Panc1 (cell line): ENCODE measurements at regions of chr12 and their contacts with region 1.

Region 1: GRCh38 chr12:57846577-57847319 is at the start of gene CTDSP2:
- DNase-seq: peak; percentile 81
- ATAC-seq: peak; percentile 85
- H3K4me3 ChIP-seq: peak within 1 kb of the TSS; percentile 93 to 94
- H3K27ac ChIP-seq: peak within 1 kb of the TSS; percentile 94
- H3K4me1 ChIP-seq: peaks cover 30% of the 10 kb centered on the region
- H3K27me3 ChIP-seq: no peaks in the 10 kb centered on the region
- CTCF ChIP-seq: no peak
- total RNA-seq, gene CTDSP2: 120 TPM

Region 2: DNA sequence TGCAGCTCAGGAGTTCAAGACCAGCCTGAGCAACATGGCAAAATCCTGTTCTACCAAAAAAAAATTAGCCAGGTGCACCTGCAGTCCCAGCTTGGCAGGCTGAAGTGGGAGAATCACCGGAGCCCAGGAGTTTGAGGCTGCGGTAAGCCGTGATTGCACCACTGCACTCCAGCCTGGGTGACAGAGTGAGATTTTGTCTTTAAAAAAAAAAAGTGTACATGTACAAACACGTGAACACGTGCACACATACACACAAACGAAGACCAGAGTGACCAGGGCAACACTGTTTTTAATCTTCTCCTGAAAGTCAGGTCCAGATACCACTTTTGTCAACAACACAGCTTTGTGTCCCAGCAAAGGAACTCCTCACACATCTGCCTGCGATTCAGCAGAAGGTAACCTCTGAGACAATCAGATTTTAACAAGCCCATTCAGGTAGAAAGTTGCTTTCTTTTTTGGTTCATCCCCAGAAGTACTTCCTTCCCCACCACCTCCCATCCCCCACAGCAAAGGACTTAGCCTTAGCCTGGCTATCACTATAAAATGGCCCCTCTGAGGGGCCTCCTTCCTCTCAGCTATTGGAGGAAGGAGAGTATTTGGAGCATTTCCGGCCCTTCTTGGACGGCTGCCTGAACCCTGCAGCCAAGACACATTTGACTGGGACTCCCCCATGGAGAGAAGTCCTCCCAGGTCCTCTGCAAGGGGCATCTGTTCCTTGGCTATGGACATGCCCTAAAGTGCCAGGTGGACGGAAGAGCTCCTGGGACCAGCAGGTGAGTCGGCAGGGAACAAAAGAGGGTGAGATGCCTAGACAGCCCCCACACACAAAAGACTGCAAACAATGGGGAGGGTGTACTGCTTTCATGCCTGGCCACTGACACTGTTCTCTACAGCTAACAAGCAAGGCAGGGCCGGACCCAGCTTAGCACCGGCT is 10.0 kb before region 1 on chr12:
- CTCF ChIA-PET with region 1: interaction called, 11 read pairs
- POLR2A ChIA-PET with region 1: no interaction called
- in situ Hi-C with region 1: no loop called
- intact Hi-C with region 1: no loop called
- DNase-seq: no peak
- ATAC-seq: peak; percentile 64
- H3K4me3 ChIP-seq: peak overlapping the region in 1 of 2 experiments; percentile 34; a peak in 2 of 4 replicates
- H3K27ac ChIP-seq: peak overlapping the region; percentile 83
- H3K4me1 ChIP-seq: peaks cover 91% of the 10 kb centered on the region
- H3K27me3 ChIP-seq: no peaks in the 10 kb centered on the region
- CTCF ChIP-seq: no peak

Region 3: GRCh38 chr12:57896434-57897201 is 49.9 kb after region 1 on chr12:
- CTCF ChIA-PET with region 1: interaction called, 4 read pairs
- POLR2A ChIA-PET with region 1: interaction called, 23 read pairs
- in situ Hi-C with region 1: no loop called
- intact Hi-C with region 1: no loop called
- DNase-seq: peak; percentile 20
- ATAC-seq: peak; percentile 76
- H3K4me3 ChIP-seq: peak overlapping the region; percentile 46 to 60
- H3K27ac ChIP-seq: peak overlapping the region; percentile 97
- H3K4me1 ChIP-seq: peaks cover 62% of the 10 kb centered on the region
- H3K27me3 ChIP-seq: no peaks in the 10 kb centered on the region
- CTCF ChIP-seq: no peak; the same call in 1 of the 2 replicates

Region 4: DNA sequence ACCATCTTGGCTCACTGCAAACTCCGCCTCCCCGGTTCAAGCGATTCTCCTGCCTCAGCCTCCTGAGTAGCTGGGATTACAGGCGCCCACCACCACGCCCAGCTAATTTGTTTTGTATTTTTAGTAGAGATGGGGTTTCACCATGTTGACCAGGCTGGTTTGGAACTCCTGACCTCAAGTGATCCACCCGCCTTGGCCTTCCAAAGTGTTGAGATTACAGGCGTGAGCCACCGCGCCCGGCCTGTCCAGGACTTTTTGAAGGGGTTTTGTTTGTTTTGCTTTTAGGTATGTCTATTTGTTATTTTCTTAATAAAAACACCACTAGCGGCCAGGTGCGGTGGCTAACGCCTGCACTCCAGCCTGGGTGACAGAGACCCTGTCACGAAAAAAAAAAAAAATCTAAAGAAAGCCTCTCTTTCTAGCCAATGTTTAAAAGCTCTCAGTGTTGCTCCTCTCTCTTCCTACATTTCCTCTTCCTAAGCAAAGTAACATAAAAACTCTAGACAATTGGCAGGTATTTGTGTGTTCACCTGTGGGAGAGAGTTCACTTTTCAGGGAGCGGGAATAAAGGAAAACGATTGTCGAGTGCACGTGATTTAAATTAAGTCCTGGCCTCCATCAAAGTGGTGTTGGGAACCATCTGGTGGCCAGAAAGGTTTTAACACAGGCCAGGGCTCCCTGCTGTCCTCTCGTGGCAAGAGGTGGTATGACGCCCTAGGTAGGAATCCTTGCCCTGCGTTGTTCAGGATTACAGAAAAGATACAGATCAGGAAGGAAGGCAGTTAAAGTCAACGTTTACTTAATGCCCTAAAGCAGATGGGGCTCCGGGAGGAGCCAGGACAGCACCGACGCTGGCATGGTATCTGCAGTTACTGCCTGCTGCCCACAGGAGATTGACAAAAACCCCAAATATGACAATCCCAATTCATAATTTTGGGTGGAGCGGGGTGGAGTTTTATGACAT is 58.4 kb after region 1 on chr12:
- CTCF ChIA-PET with region 1: no interaction called
- POLR2A ChIA-PET with region 1: interaction called, 13 read pairs
- in situ Hi-C with region 1: no loop called
- intact Hi-C with region 1: no loop called
- DNase-seq: peak; percentile 93
- ATAC-seq: peak; percentile 94
- H3K4me3 ChIP-seq: no peak overlapping the region
- H3K27ac ChIP-seq: peak overlapping the region; percentile 86
- H3K4me1 ChIP-seq: peaks cover 3% of the 10 kb centered on the region; the same call in 1 of the 2 replicates
- H3K27me3 ChIP-seq: no peaks in the 10 kb centered on the region
- CTCF ChIP-seq: peak; percentile 100

Region 5: GRCh38 chr12:57952766-57953165 is 106.0 kb after region 1 on chr12:
- CTCF ChIA-PET with region 1: no interaction called
- POLR2A ChIA-PET with region 1: interaction called, 11 read pairs
- in situ Hi-C with region 1: no loop called
- intact Hi-C with region 1: no loop called
- DNase-seq: no peak
- ATAC-seq: no peak
- H3K4me3 ChIP-seq: no peak overlapping the region
- H3K27ac ChIP-seq: no peak overlapping the region
- H3K4me1 ChIP-seq: no peaks in the 10 kb centered on the region
- H3K27me3 ChIP-seq: no peaks in the 10 kb centered on the region
- CTCF ChIP-seq: no peak